ENCODE measurements at regions of chr12 and their contacts with region 1.

Region 1: DNA sequence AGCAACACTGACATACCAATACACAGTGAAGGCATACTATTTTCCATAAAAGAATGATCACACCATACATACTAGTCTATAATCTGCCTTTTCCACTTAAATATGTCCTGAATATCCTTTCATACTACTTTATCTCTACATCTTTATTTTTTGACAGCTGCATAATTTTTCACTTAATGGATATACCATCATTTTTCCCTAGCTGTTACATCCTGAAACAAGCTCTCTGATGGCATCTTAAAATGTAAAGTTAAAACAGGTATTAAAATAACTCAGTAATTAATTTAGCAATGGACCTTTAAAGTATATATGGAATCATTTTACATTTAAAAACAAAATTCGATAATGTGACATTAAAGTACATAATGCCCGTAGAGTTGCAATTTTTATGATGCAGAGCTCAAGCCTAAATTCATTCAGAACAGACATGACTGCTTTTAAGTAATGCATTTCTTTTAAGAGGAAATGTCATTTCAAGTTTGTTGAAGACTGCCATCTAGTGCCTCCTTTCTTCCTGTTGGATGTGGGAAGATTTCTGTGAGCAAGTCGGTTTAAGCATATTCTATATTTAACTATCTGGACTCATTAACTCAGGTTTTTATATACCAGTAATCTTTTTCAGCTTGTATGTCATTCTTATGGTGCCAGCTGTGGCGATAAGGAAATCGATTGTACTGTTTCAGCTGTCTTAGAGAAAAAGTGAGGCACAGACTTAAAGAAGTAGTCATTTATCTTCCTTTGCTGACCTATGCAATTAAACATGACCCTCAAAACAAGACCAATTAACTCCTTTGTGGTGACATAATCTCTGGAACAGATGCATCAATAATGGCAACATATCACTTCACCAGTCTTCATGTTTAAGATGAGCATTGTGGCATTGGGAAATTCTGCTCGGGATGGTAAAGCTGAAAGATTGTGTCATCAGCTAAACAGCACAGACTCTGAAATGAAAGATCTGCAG is 20.3 kb downstream of the PRICKLE1 start:
- DNase-seq: peak; percentile 49
- ATAC-seq: peak; percentile 63
- H3K4me3 ChIP-seq: no peak overlapping the region
- H3K27ac ChIP-seq: no peak overlapping the region
- H3K4me1 ChIP-seq: no peaks in the 10 kb centered on the region
- H3K27me3 ChIP-seq: no peaks in the 10 kb centered on the region
- CTCF ChIP-seq: peak; percentile 55 to 70 (median 61); a peak in 5 of 6 replicates
- POLR2A ChIP-seq: no peak
- RAD21 ChIP-seq: peak; percentile 79

Region 2: GRCh38 chr12:40946612-40947194 is 1622.5 kb before region 1 on chr12:
- CTCF ChIA-PET with region 1: no interaction called
- POLR2A ChIA-PET with region 1: no interaction called
- RAD21 ChIA-PET with region 1: no interaction called
- intact Hi-C with region 1: loop called (anchors 5 kb)
- DNase-seq: peak; percentile 22
- ATAC-seq: no peak
- H3K4me3 ChIP-seq: no peak overlapping the region
- H3K27ac ChIP-seq: no peak overlapping the region
- H3K4me1 ChIP-seq: no peaks in the 10 kb centered on the region
- H3K27me3 ChIP-seq: no peaks in the 10 kb centered on the region
- CTCF ChIP-seq: peak; percentile 31 to 63 (median 53); a peak in 4 of 6 replicates
- POLR2A ChIP-seq: no peak
- RAD21 ChIP-seq: peak; percentile 71

Region 3: DNA sequence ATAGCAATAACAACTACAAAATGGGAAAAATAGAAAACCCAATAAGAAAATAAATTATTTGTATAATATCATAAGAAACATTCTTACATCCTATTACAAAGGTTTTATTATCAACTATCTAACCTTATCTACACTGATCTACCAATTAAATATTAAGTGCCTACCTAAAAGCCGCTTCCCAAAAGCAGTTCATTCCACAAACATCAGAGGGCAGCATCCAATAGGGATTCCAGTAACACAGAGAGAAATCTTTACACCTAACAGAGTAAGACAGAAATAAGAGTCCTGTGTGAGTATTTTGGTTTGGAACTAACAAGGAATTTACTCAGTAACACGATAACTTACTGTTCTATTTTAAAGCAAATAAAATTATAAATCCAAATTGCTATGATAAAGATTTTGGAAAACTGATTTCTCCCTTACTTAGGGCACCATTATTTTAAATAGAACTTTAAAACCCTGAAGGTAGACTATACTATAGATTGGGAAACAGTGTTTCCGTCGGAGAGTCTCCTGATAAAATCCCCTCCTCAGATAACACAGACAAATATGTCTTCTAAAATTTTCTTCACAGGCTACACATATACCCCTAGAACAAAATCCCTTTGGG is 439.5 kb before region 1 on chr12:
- CTCF ChIA-PET with region 1: interaction called, 3 read pairs
- POLR2A ChIA-PET with region 1: no interaction called
- RAD21 ChIA-PET with region 1: no interaction called
- intact Hi-C with region 1: loop called (anchors 2 kb)
- DNase-seq: peak; percentile 61
- ATAC-seq: peak; percentile 88
- H3K4me3 ChIP-seq: no peak overlapping the region
- H3K27ac ChIP-seq: no peak overlapping the region
- H3K4me1 ChIP-seq: peaks cover 0 to 13% of the 10 kb centered on the region in 2 experiments; a peak in 2 of 4 replicates
- H3K27me3 ChIP-seq: no peaks in the 10 kb centered on the region
- CTCF ChIP-seq: peak; percentile 74 to 85 (median 83)
- POLR2A ChIP-seq: no peak
- RAD21 ChIP-seq: peak; percentile 91

Region 4: GRCh38 chr12:42237052-42237852 is 332.0 kb before region 1 on chr12:
- CTCF ChIA-PET with region 1: no interaction called
- POLR2A ChIA-PET with region 1: no interaction called
- RAD21 ChIA-PET with region 1: no interaction called
- intact Hi-C with region 1: loop called (anchors 5 kb)
- DNase-seq: peak; percentile 41
- ATAC-seq: peak; percentile 84
- H3K4me3 ChIP-seq: peak overlapping the region; percentile 59 to 70
- H3K27ac ChIP-seq: peak overlapping the region; percentile 88
- H3K4me1 ChIP-seq: peaks cover 0 to 15% of the 10 kb centered on the region in 2 experiments; a peak in 2 of 4 replicates
- H3K27me3 ChIP-seq: no peaks in the 10 kb centered on the region
- CTCF ChIP-seq: peak in 2 of 3 experiments; percentile 41 to 47; a peak in 4 of 6 replicates
- POLR2A ChIP-seq: no peak
- RAD21 ChIP-seq: no peak

Region 5: DNA sequence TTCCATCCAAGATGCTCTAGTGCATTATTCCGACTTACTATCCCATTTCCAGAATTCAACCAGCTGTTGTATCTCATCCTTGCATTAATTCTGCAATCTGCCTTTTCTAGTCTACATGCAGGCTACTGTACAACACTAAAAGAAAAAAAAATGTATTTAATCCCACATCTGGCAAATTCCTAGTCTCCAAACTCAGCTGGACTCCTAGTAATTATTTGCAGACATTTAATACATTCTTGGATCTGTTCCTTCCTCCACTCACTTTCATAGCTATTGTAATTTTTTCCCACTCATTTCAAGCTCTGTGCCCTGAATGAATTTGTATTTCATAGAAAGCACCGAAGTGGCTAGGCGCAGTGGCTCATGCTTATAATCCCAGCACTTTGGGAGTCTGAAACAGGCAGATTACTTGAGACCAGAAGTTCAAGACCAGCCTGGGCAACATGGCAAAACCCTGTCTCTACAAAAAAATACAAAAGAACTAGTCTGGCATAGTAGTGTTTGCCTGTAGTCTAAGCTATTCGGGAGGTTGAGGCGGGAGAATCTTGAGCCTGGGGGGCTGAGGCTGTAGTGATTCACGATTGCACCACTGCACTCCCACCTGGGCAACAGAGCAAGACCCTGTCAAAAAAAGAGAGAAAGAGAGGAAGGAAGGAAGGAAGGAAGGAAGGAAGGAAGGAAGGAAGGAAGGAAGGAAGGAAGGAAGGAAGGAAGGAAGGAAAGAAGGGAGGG is 291.7 kb before region 1 on chr12:
- CTCF ChIA-PET with region 1: no interaction called
- POLR2A ChIA-PET with region 1: no interaction called
- RAD21 ChIA-PET with region 1: no interaction called
- intact Hi-C with region 1: loop called (anchors 5 kb)
- DNase-seq: no peak
- ATAC-seq: no peak
- H3K4me3 ChIP-seq: no peak overlapping the region
- H3K27ac ChIP-seq: no peak overlapping the region
- H3K4me1 ChIP-seq: no peaks in the 10 kb centered on the region
- H3K27me3 ChIP-seq: no peaks in the 10 kb centered on the region
- CTCF ChIP-seq: no peak
- POLR2A ChIP-seq: no peak
- RAD21 ChIP-seq: no peak

Region 6: GRCh38 chr12:42482445-42483237 is 86.6 kb before region 1 on chr12:
- CTCF ChIA-PET with region 1: interaction called, 33 read pairs
- POLR2A ChIA-PET with region 1: no interaction called
- RAD21 ChIA-PET with region 1: interaction called, 4 to 12 read pairs
- intact Hi-C with region 1: loop called (anchors 1 kb)
- DNase-seq: no peak
- ATAC-seq: peak; percentile 87
- H3K4me3 ChIP-seq: peak overlapping the region; percentile 68 to 73
- H3K27ac ChIP-seq: peak overlapping the region; percentile 29; the same call in 1 of the 2 replicates
- H3K4me1 ChIP-seq: peaks cover 11% of the 10 kb centered on the region in 2 experiments; a peak in 2 of 4 replicates
- H3K27me3 ChIP-seq: no peaks in the 10 kb centered on the region
- CTCF ChIP-seq: peak; percentile 82 to 97 (median 91)
- POLR2A ChIP-seq: no peak
- RAD21 ChIP-seq: peak; percentile 89

Region 7: DNA sequence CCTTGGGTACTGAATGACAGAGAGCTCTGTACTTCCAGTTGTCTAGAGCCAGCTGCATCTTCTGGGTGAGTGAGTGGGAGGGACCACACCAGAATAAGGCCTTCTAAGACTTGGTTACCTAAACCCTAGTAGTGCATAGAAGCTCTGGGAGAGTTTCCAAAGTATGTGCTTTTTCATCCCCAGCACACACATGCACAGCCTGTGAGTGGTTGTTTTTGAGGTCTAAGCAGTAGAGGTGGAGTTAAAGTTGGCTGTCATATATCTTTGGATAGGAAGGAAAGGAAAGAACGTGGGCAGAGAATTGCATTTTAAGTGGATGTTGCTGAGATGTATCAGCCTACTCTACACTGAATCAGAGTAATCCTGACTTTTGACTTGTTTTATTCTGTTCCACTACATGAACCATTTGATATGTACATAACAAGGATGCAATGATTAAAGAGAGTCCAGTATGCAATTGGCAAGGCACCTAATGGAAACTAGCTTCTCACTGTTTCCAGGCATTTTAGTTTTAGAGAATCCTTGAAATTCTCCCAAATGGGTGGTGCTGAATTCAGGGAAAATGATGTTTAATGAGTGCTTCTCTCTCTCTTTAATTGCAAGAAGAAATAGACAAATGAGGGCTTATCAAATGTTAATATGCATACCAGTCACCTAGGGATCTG is 72.1 kb after region 1 on chr12:
- CTCF ChIA-PET with region 1: no interaction called
- POLR2A ChIA-PET with region 1: no interaction called
- RAD21 ChIA-PET with region 1: no interaction called
- intact Hi-C with region 1: no loop called
- DNase-seq: no peak
- ATAC-seq: no peak
- H3K4me3 ChIP-seq: no peak overlapping the region
- H3K27ac ChIP-seq: no peak overlapping the region
- H3K4me1 ChIP-seq: no peaks in the 10 kb centered on the region; a peak in 1 of 4 replicates
- H3K27me3 ChIP-seq: no peaks in the 10 kb centered on the region
- CTCF ChIP-seq: no peak
- POLR2A ChIP-seq: no peak
- RAD21 ChIP-seq: no peak